CD8-positive, alpha-beta T cell (primary cell): ENCODE measurements at regions of chr7 and their contacts with region 1.

Region 1: GRCh38 chr7:44797329-44798251 is 1.1 kb downstream of the PPIA start:
- DNase-seq: peak; percentile 64 to 92 (median 82)
- ATAC-seq: peak; percentile 61
- H3K4me3 ChIP-seq: peak overlapping the region; percentile 97 to 98
- H3K4me3 Mint-ChIP-seq: peak overlapping the region; percentile 92
- H3K27ac ChIP-seq: peak overlapping the region; percentile 97 to 99
- H3K27ac Mint-ChIP-seq: peak overlapping the region; percentile 96
- H3K4me1 ChIP-seq: peaks cover 22% of the 10 kb centered on the region
- H3K4me1 Mint-ChIP-seq: peaks cover 44% of the 10 kb centered on the region
- H3K27me3 ChIP-seq: no peaks in the 10 kb centered on the region
- H3K27me3 Mint-ChIP-seq: no peaks in the 10 kb centered on the region
- CTCF ChIP-seq: no peak

Region 2: DNA sequence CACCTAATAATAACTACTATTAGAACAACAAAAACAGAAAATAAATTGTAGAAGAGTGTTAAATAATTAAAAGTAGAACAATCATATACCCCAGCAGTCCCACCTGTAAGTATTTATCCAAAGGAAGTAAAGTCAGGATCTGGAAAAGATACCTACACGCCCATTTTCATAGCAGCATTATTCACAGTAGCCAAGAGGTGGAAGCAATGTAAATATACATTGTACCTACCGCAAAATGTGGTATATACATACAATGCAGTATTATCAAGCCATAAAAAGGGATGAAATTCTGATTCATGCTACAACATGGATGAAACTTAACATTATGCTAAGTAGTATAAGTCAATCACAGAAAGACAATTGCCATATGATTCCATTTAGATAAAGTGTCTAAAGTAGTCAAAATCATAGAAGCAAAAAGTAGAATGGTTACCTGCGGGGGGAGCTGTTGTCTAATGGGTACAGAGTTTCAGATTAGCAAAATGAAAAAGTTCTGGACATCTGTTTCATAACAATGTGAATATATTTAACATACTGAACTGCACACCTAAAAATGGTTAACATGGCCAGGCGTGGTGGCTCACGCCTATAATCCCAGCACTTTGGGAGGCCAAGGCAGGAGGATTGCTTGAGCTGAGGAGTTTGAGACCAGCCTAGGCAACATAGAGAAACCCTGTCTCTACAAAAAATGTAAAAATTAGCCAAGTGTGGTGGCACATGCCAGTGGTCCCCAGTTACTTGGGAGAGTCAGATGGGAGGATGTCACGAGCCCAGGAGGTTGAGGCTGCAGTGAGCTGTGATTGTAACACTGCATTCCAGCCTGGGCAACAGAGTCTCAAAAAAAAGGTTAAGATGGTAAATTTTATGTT is 209.5 kb before region 1 on chr7:
- CTCF ChIA-PET with region 1: no interaction called
- POLR2A ChIA-PET with region 1: no interaction called
- intact Hi-C with region 1: loop called in 1 of 2 experiments (anchors 1 kb)
- DNase-seq: peak; percentile 34 to 79 (median 63)
- ATAC-seq: peak; percentile 81
- H3K4me3 ChIP-seq: no peak overlapping the region
- H3K4me3 Mint-ChIP-seq: no peak overlapping the region
- H3K27ac ChIP-seq: no peak overlapping the region
- H3K27ac Mint-ChIP-seq: no peak overlapping the region
- H3K4me1 ChIP-seq: no peaks in the 10 kb centered on the region
- H3K4me1 Mint-ChIP-seq: peaks cover 6% of the 10 kb centered on the region
- H3K27me3 ChIP-seq: no peaks in the 10 kb centered on the region
- H3K27me3 Mint-ChIP-seq: no peaks in the 10 kb centered on the region
- CTCF ChIP-seq: peak; percentile 68

Region 3: GRCh38 chr7:44638611-44639557 is 158.7 kb before region 1 on chr7:
- CTCF ChIA-PET with region 1: interaction called, 5 read pairs
- POLR2A ChIA-PET with region 1: interaction called, 3 read pairs
- intact Hi-C with region 1: loop called in 1 of 2 experiments (anchors 1 kb)
- DNase-seq: peak; percentile 58 to 91 (median 82)
- ATAC-seq: peak; percentile 56
- H3K4me3 ChIP-seq: peak overlapping the region in 1 of 2 experiments; percentile 9
- H3K4me3 Mint-ChIP-seq: peak overlapping the region; percentile 75
- H3K27ac ChIP-seq: peak overlapping the region; percentile 73 to 97
- H3K27ac Mint-ChIP-seq: peak overlapping the region; percentile 99
- H3K4me1 ChIP-seq: peaks cover 59% of the 10 kb centered on the region
- H3K4me1 Mint-ChIP-seq: peaks cover 66% of the 10 kb centered on the region
- H3K27me3 ChIP-seq: no peaks in the 10 kb centered on the region
- H3K27me3 Mint-ChIP-seq: no peaks in the 10 kb centered on the region
- CTCF ChIP-seq: no peak

Region 4: DNA sequence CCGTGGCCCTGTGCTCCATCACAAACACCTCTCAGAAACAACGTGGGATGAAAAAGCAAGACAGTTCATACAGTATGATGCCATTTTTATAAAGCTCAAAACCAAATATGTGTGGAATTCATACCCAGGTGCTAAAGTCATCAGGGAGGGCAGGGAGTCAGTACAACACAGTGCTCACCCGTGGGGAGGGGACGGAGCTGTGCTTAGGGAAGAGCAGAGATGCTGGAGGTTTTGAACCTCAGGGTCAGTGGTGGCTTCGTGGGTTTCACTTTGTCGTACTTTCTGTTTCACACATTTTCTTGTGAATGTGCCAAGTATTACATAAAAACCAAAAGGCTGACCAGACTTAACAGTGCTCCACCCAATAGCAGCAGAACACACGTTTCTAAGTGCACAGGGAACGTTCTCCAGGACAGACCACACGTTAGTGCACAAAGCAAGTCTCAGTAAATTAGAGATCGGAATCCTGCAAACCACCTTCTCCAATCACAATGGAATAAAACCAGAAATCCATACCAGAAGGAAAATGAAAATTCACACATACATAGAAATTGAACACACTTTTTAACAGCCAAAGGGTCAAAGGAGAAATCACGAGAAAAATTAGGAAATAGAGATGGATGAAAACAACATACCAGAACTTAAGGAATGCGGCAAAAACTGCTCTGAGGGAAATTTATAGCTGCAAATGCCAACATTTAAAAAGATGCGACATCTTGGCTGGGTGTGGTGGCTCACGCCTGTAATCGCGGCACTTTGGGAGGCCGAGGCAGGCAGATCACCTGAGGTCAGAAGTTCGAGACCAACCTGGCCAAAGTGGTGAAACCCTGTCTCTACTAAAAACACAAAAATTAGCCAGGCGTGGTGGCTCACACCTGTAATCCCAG is 27.6 kb before region 1 on chr7:
- CTCF ChIA-PET with region 1: no interaction called
- POLR2A ChIA-PET with region 1: interaction called, 11 read pairs
- intact Hi-C with region 1: no loop called
- DNase-seq: peak in 3 of 9 experiments; percentile 25 to 81 (median 64)
- ATAC-seq: peak; percentile 67
- H3K4me3 ChIP-seq: no peak overlapping the region
- H3K4me3 Mint-ChIP-seq: peak overlapping the region; percentile 50
- H3K27ac ChIP-seq: peak overlapping the region in 1 of 2 experiments; percentile 53
- H3K27ac Mint-ChIP-seq: peak overlapping the region; percentile 88
- H3K4me1 ChIP-seq: peaks cover 36% of the 10 kb centered on the region
- H3K4me1 Mint-ChIP-seq: peaks cover 41% of the 10 kb centered on the region
- H3K27me3 ChIP-seq: no peaks in the 10 kb centered on the region
- H3K27me3 Mint-ChIP-seq: no peaks in the 10 kb centered on the region
- CTCF ChIP-seq: no peak